Lower leg skin (tissue), 4 donors: ENCODE measurements at regions of chr7 and their contacts with region 1.

Region 1: GRCh38 chr7:122305475-122306319 is 1.1 kb upstream of the FEZF1 start:
- DNase-seq: no peak
- H3K4me3 ChIP-seq: no peak overlapping the region
- CTCF ChIP-seq: no peak
- POLR2A ChIP-seq: no peak

Region 2: GRCh38 chr7:120502132-120502531 is 1803.6 kb before region 1 on chr7:
- intact Hi-C with region 1: loop called (anchors 5 kb)
- DNase-seq: no peak
- H3K4me3 ChIP-seq: no peak overlapping the region
- CTCF ChIP-seq: no peak
- POLR2A ChIP-seq: no peak

Region 3: DNA sequence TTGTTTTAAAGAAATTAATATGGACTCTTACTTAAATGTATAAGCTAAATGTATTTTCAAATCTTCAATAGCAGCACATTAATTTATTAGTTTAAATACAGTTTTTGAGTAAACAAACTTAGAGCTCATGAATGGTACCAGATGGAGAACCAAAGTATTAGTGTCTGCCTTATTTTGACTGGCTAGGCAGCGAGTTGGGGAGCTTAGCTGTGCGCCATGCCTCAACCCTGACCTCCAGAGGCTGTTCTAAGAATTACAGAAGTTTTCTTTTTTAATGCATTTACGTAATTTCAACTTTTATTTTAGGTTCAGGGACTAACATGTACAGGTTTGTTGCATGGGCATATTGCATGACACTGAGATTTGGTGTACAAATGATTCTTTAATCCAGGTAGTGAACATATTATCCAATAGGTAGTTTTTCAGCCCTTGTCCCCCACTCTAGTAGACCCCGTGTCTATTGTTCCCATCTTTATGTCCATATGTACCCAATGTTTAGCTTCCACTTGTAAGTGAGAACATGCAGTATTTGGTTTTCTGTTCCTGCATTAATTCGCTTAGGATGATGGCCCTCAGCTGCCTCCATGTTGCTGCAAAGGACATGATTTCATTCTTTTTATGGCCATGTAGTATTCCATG is 1061.9 kb after region 1 on chr7:
- intact Hi-C with region 1: no loop called
- DNase-seq: no peak
- H3K4me3 ChIP-seq: no peak overlapping the region
- CTCF ChIP-seq: no peak
- POLR2A ChIP-seq: no peak